Transverse colon (tissue), 4 donors: ENCODE measurements at regions of chr9 and their contacts with region 1.

Region 1: GRCh38 chr9:28092981-28093936 is 520.0 kb upstream of the C9orf72 start:
- DNase-seq: no peak
- H3K4me3 ChIP-seq: no peak overlapping the region
- H3K27ac ChIP-seq: no peak overlapping the region
- H3K4me1 ChIP-seq: no peaks in the 10 kb centered on the region
- H3K27me3 ChIP-seq: no peaks in the 10 kb centered on the region
- CTCF ChIP-seq: no peak
- EP300 ChIP-seq: no peak
- POLR2A ChIP-seq: no peak

Region 2: GRCh38 chr9:27888661-27889295 is 204.5 kb before region 1 on chr9:
- in situ Hi-C with region 1: no loop called
- intact Hi-C with region 1: no loop called
- DNase-seq: peak; percentile 33
- H3K4me3 ChIP-seq: no peak overlapping the region
- H3K27ac ChIP-seq: no peak overlapping the region
- H3K4me1 ChIP-seq: no peaks in the 10 kb centered on the region
- H3K27me3 ChIP-seq: no peaks in the 10 kb centered on the region
- CTCF ChIP-seq: peak in 4 of 5 experiments; percentile 52 to 67 (median 60)
- EP300 ChIP-seq: no peak
- POLR2A ChIP-seq: no peak

Region 3: DNA sequence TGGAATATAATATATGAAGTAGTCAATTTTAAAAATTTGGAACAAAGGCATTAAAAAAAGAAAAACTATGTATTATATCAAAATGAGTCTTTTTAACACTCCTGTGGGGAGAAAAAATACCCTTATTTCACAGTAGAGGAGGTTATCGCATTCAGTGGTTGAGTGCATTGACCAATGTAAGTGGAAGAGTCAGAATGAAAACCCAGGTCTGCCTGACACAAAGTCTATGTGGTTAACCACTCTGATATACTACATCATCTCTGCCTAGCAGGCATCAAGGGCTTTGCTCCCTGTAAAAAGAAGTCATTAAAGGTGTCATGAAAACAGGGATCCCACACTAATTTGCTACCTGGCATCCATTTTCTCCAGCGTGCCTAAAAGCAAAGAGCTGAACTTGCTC is 102.7 kb before region 1 on chr9:
- in situ Hi-C with region 1: loop called in 1 of 4 experiments (anchors 25 kb)
- intact Hi-C with region 1: no loop called
- DNase-seq: no peak
- H3K4me3 ChIP-seq: no peak overlapping the region
- H3K27ac ChIP-seq: no peak overlapping the region
- H3K4me1 ChIP-seq: no peaks in the 10 kb centered on the region
- H3K27me3 ChIP-seq: no peaks in the 10 kb centered on the region
- CTCF ChIP-seq: no peak
- EP300 ChIP-seq: no peak
- POLR2A ChIP-seq: no peak

Region 4: GRCh38 chr9:28024676-28025075 is 68.6 kb before region 1 on chr9:
- in situ Hi-C with region 1: no loop called
- intact Hi-C with region 1: no loop called
- DNase-seq: no peak
- H3K4me3 ChIP-seq: no peak overlapping the region
- H3K27ac ChIP-seq: no peak overlapping the region
- H3K4me1 ChIP-seq: no peaks in the 10 kb centered on the region
- H3K27me3 ChIP-seq: no peaks in the 10 kb centered on the region
- CTCF ChIP-seq: no peak
- EP300 ChIP-seq: no peak
- POLR2A ChIP-seq: no peak